ENCODE measurements at regions of chr16 and their contacts with region 1.

Region 1: DNA sequence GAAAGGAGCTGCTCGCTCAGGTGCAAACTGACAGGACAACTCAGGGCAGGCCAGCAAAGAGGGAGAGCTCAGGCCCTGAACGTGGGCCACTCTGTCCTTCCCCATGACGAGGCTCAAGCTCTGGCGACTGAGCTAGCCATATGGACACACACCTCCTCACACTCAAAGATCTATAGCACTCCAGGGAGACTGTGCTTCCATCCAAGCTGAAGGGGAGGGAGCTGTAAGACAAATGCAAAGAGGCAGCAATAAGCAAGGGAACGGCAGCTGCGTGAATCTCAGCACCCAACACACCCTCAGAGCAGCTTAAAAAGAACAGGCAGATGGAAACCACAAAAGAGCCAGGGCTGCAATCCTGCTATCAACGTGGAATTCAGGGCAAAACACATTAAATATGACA is 13.5 kb downstream of the NUDT16L1 start:
- DNase-seq: no peak
- H3K4me3 ChIP-seq: no peak overlapping the region
- H3K4me3 Mint-ChIP-seq: no peak overlapping the region
- H3K27ac ChIP-seq: no peak overlapping the region
- H3K27ac Mint-ChIP-seq: peak overlapping the region in 2 of 8 donors; percentile 7 to 72
- H3K4me1 ChIP-seq: no peaks in the 10 kb centered on the region
- H3K4me1 Mint-ChIP-seq: no peaks in the 10 kb centered on the region
- H3K27me3 ChIP-seq: no peaks in the 10 kb centered on the region
- H3K27me3 Mint-ChIP-seq: no peaks in the 10 kb centered on the region

Region 2: GRCh38 chr16:4682616-4683254 is 24.1 kb before region 1 on chr16:
- CTCF ChIA-PET with region 1: no interaction called
- POLR2A ChIA-PET with region 1: no interaction called
- DNase-seq: peak in 1 of 5 donors; percentile 42
- H3K4me3 ChIP-seq: no peak overlapping the region
- H3K4me3 Mint-ChIP-seq: no peak overlapping the region
- H3K27ac ChIP-seq: no peak overlapping the region
- H3K27ac Mint-ChIP-seq: peak overlapping the region in 1 of 8 donors; percentile 44
- H3K4me1 ChIP-seq: no peaks in the 10 kb centered on the region
- H3K4me1 Mint-ChIP-seq: peaks cover 0 to 13% (median 3%) of the 10 kb centered on the region in 3 donors
- H3K27me3 ChIP-seq: no peaks in the 10 kb centered on the region
- H3K27me3 Mint-ChIP-seq: no peaks in the 10 kb centered on the region

Region 3: GRCh38 chr16:4753227-4753626 is 46.4 kb after region 1 on chr16:
- CTCF ChIA-PET with region 1: no interaction called
- POLR2A ChIA-PET with region 1: interaction called, 17 read pairs
- DNase-seq: no peak
- H3K4me3 ChIP-seq: no peak overlapping the region
- H3K4me3 Mint-ChIP-seq: no peak overlapping the region
- H3K27ac ChIP-seq: no peak overlapping the region
- H3K27ac Mint-ChIP-seq: peak overlapping the region in 1 of 8 donors; percentile 17
- H3K4me1 ChIP-seq: no peaks in the 10 kb centered on the region
- H3K4me1 Mint-ChIP-seq: peaks cover 5 to 10% (median 6%) of the 10 kb centered on the region in 3 donors
- H3K27me3 ChIP-seq: no peaks in the 10 kb centered on the region
- H3K27me3 Mint-ChIP-seq: no peaks in the 10 kb centered on the region

Measured in CD8-positive, alpha-beta memory T cell (primary cell).